ENCODE measurements at regions of chr2 and their contacts with region 1.

Region 1: GRCh38 chr2:215728504-215729087 is 284.8 kb downstream of the MREG start:
- DNase-seq: peak; percentile 35
- ATAC-seq: peak; percentile 90
- H3K4me3 ChIP-seq: no peak overlapping the region
- H3K27ac ChIP-seq: no peak overlapping the region
- H3K4me1 ChIP-seq: 0 out of 2 replicates have a peak, but pooled peaks cover 6% of the 10 kb centered on the region
- H3K27me3 ChIP-seq: no peaks in the 10 kb centered on the region
- CTCF ChIP-seq: 0 out of 6 replicates have a peak, but pooled peaks of 1 of the 3 experiments have one; percentile 4
- EP300 ChIP-seq: peak in 1 of 2 experiments; percentile 20; a peak in 1 of 4 replicates
- POLR2A ChIP-seq: no peak
- RAD21 ChIP-seq: no peak

Region 2: GRCh38 chr2:215553946-215554345 is 174.7 kb before region 1 on chr2:
- CTCF ChIA-PET with region 1: no interaction called
- POLR2A ChIA-PET with region 1: no interaction called
- RAD21 ChIA-PET with region 1: no interaction called
- SMC1A ChIA-PET with region 1: no interaction called
- in situ Hi-C with region 1: no loop called
- intact Hi-C with region 1: no loop called
- DNase-seq: no peak
- ATAC-seq: peak; percentile 56; the same call in 2 of the 3 replicates
- H3K4me3 ChIP-seq: no peak overlapping the region
- H3K27ac ChIP-seq: no peak overlapping the region
- H3K4me1 ChIP-seq: no peaks in the 10 kb centered on the region
- H3K27me3 ChIP-seq: no peaks in the 10 kb centered on the region
- CTCF ChIP-seq: peak; percentile 8 to 42 (median 27); a peak in 2 of 6 replicates
- EP300 ChIP-seq: no peak
- POLR2A ChIP-seq: no peak
- RAD21 ChIP-seq: peak; percentile 25; the same call in 1 of the 2 replicates

Region 3: GRCh38 chr2:215718436-215718835 is 10.2 kb before region 1 on chr2:
- CTCF ChIA-PET with region 1: interaction called, 11 read pairs
- POLR2A ChIA-PET with region 1: no interaction called
- RAD21 ChIA-PET with region 1: no interaction called
- SMC1A ChIA-PET with region 1: interaction called, 3 read pairs
- in situ Hi-C with region 1: no loop called
- intact Hi-C with region 1: no loop called
- DNase-seq: no peak
- ATAC-seq: no peak
- H3K4me3 ChIP-seq: no peak overlapping the region
- H3K27ac ChIP-seq: no peak overlapping the region
- H3K4me1 ChIP-seq: no peaks in the 10 kb centered on the region
- H3K27me3 ChIP-seq: no peaks in the 10 kb centered on the region
- CTCF ChIP-seq: no peak
- EP300 ChIP-seq: no peak
- POLR2A ChIP-seq: no peak
- RAD21 ChIP-seq: no peak

Region 4: DNA sequence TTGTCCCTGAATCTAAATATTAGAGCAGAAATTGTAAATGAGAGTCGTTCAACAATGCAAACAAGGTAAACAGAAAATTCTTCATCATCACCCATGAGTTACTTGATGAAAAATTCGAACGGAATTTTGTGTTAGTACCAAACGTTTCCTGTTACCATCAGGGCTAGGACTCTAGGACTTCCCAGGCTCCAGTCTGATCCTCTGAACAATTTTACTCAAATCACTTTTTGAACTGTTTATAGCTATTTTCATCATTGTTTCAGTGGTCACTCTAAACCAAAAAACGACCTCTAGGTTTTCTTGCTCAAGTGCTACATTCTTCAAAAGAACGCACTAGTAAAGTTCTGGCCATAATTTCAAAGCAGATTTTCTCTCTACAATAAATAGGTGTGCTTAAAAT is 11.5 kb after region 1 on chr2:
- CTCF ChIA-PET with region 1: interaction called, 5 read pairs
- POLR2A ChIA-PET with region 1: no interaction called
- RAD21 ChIA-PET with region 1: interaction called, 3 read pairs
- SMC1A ChIA-PET with region 1: interaction called, 11 read pairs
- in situ Hi-C with region 1: no loop called
- intact Hi-C with region 1: no loop called
- DNase-seq: no peak
- ATAC-seq: no peak
- H3K4me3 ChIP-seq: no peak overlapping the region
- H3K27ac ChIP-seq: no peak overlapping the region
- H3K4me1 ChIP-seq: no peaks in the 10 kb centered on the region
- H3K27me3 ChIP-seq: no peaks in the 10 kb centered on the region
- CTCF ChIP-seq: no peak
- EP300 ChIP-seq: no peak
- POLR2A ChIP-seq: no peak
- RAD21 ChIP-seq: no peak

Region 5: DNA sequence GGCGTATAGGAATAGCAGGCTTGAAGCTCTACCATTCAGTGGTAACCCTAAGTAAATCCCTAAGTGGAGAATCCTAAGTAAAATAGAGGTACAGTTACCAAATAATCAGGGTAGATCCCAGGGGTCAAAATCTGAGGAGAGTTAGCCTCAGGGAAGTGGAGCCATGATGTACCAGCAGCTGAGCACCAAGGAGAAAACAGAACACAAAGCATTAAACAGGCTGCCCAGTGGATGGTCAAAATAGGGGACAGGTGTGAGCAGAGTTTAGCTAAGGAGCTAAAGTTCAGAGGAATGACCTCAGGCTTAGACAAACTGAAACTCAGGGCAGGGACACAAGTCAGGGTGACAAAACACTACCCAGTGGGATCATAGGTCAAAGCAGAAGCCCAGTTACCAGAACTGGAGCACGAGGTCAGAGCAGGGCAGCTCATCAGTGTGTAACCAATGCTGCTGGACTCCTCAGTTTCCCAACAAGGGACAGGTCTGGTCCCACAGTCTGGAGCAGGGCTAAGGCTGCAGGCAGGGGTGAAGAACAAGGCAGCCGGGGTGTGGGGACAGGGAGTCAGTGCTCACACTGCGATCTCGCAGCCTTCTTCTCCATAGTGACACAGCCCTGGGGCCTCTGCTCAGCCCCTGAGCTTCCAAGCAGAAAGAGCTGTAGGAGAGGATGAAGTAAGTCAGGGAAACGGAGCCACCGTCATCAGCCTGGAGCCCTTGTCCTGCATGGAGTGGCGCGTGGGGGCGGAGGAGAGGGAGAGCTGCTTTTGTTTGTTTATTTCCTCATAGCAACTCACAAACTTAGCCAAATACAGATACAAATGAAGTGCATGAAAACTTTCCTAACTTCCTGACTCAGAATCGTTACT is 20.7 kb after region 1 on chr2:
- CTCF ChIA-PET with region 1: interaction called, 6 read pairs
- POLR2A ChIA-PET with region 1: interaction called, 3 read pairs
- RAD21 ChIA-PET with region 1: interaction called, 3 read pairs
- SMC1A ChIA-PET with region 1: interaction called, 14 read pairs
- in situ Hi-C with region 1: no loop called
- intact Hi-C with region 1: no loop called
- DNase-seq: no peak
- ATAC-seq: peak; percentile 83
- H3K4me3 ChIP-seq: no peak overlapping the region
- H3K27ac ChIP-seq: no peak overlapping the region
- H3K4me1 ChIP-seq: no peaks in the 10 kb centered on the region
- H3K27me3 ChIP-seq: no peaks in the 10 kb centered on the region; a peak in 1 of 4 replicates
- CTCF ChIP-seq: no peak
- EP300 ChIP-seq: no peak
- POLR2A ChIP-seq: no peak
- RAD21 ChIP-seq: no peak

Measured in GM12878 (cell line).